ENCODE measurements at regions of chr2 and their contacts with region 1.

Region 1: GRCh38 chr2:6186332-6187151 is 494.4 kb downstream of the SOX11 start:
- DNase-seq: peak; percentile 92
- H3K4me3 Mint-ChIP-seq: peak overlapping the region; percentile 10
- H3K27ac Mint-ChIP-seq: peak overlapping the region; percentile 20
- H3K4me1 Mint-ChIP-seq: peaks cover 28% of the 10 kb centered on the region
- H3K27me3 Mint-ChIP-seq: no peaks in the 10 kb centered on the region
- CTCF ChIP-seq: no peak

Region 2: DNA sequence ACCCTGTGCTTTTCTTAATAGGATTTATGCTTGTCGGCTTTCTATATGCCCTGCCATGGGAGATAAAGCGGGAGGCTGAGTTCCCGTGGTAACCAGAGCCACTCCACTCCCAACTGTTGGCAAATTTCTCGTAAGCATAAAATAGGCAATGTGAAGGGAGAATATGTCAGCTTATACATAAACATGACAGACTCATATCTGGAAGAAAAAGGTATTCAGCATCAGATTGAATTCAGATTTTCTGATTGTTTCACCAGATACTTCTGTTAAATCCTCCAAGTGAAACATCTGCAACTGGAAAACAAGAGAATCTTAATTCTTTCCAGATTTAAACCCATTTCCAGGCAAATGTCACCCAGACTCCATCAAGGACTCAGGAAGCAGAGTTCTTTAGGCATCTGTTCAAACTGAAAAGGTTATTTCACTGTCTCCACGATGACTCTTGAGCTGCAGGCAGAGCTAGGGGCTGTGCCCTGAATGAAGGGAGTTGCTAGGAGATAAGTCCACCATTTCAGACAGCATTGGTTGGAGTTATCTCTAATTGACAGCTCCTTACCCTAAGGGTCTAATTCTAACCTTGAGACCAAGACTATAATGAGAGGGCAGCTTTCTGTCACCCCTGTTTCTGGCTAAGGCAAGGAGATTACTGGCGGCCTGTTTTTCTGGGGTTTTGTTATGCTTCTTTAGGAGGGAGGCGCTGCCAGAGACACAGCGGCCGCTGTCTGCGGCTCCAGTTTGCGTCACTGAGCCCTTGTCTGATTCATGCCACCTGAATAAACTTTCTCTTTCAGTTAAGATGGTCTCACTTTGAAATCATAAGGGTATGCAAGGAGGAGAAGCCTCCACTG is 113.1 kb before region 1 on chr2:
- CTCF ChIA-PET with region 1: no interaction called
- POLR2A ChIA-PET with region 1: no interaction called
- intact Hi-C with region 1: no loop called
- DNase-seq: no peak
- H3K4me3 Mint-ChIP-seq: no peak overlapping the region
- H3K27ac Mint-ChIP-seq: no peak overlapping the region
- H3K4me1 Mint-ChIP-seq: peaks cover 10% of the 10 kb centered on the region
- H3K27me3 Mint-ChIP-seq: no peaks in the 10 kb centered on the region
- CTCF ChIP-seq: no peak

Region 3: GRCh38 chr2:6202756-6203155 is 16.2 kb after region 1 on chr2:
- CTCF ChIA-PET with region 1: interaction called, 7 read pairs
- POLR2A ChIA-PET with region 1: interaction called, 12 read pairs
- intact Hi-C with region 1: no loop called
- DNase-seq: peak; percentile 88
- H3K4me3 Mint-ChIP-seq: peak overlapping the region; percentile 8
- H3K27ac Mint-ChIP-seq: peak overlapping the region; percentile 57
- H3K4me1 Mint-ChIP-seq: peaks cover 20% of the 10 kb centered on the region
- H3K27me3 Mint-ChIP-seq: no peaks in the 10 kb centered on the region
- CTCF ChIP-seq: no peak

Measured in MCF 10A (cell line).